CD8-positive, alpha-beta T cell (primary cell): ENCODE measurements at regions of chr5 and their contacts with region 1.

Region 1: GRCh38 chr5:172114875-172115422 is 73.1 kb downstream of the STK10 start:
- DNase-seq: peak; percentile 37 to 91 (median 67)
- ATAC-seq: peak; percentile 35
- H3K4me3 ChIP-seq: peak overlapping the region; percentile 13 to 30
- H3K4me3 Mint-ChIP-seq: peak overlapping the region; percentile 77
- H3K27ac ChIP-seq: peak overlapping the region; percentile 45 to 83
- H3K27ac Mint-ChIP-seq: peak overlapping the region; percentile 97
- H3K4me1 ChIP-seq: peaks cover 89% of the 10 kb centered on the region
- H3K4me1 Mint-ChIP-seq: peaks cover 83% of the 10 kb centered on the region
- H3K27me3 ChIP-seq: no peaks in the 10 kb centered on the region
- H3K27me3 Mint-ChIP-seq: no peaks in the 10 kb centered on the region
- CTCF ChIP-seq: no peak

Region 2: GRCh38 chr5:172065501-172065990 is 49.4 kb before region 1 on chr5:
- CTCF ChIA-PET with region 1: interaction called, 3 read pairs
- POLR2A ChIA-PET with region 1: interaction called, 10 read pairs
- intact Hi-C with region 1: loop called (anchors 2 to 5 kb)
- DNase-seq: no peak
- ATAC-seq: no peak
- H3K4me3 ChIP-seq: peak overlapping the region in 1 of 2 experiments; percentile 6
- H3K4me3 Mint-ChIP-seq: peak overlapping the region; percentile 15
- H3K27ac ChIP-seq: peak overlapping the region; percentile 34 to 67
- H3K27ac Mint-ChIP-seq: peak overlapping the region; percentile 98
- H3K4me1 ChIP-seq: peaks cover 57% of the 10 kb centered on the region
- H3K4me1 Mint-ChIP-seq: peaks cover 72% of the 10 kb centered on the region
- H3K27me3 ChIP-seq: no peaks in the 10 kb centered on the region
- H3K27me3 Mint-ChIP-seq: no peaks in the 10 kb centered on the region
- CTCF ChIP-seq: no peak